Gastrocnemius medialis (tissue), 4 donors: ENCODE measurements at regions of chr2 and their contacts with region 1.

Region 1: GRCh38 chr2:31333527-31334183 is 80.9 kb downstream of the XDH start:
- DNase-seq: peak; percentile 60 to 75
- ATAC-seq: peak; percentile 79 to 93
- H3K4me3 ChIP-seq: no peak overlapping the region
- H3K27ac ChIP-seq: peak overlapping the region; percentile 20 to 78 (median 67)
- H3K4me1 ChIP-seq: peaks cover 9 to 17% of the 10 kb centered on the region in 2 donors
- H3K27me3 ChIP-seq: no peaks in the 10 kb centered on the region
- CTCF ChIP-seq: peak; percentile 85 to 96 (median 91)
- POLR2A ChIP-seq: no peak

Region 2: GRCh38 chr2:30208452-30208851 is 1125.2 kb before region 1 on chr2:
- in situ Hi-C with region 1: loop called in 1 of 4 experiments (anchors 25 kb)
- intact Hi-C with region 1: no loop called
- DNase-seq: peak; percentile 35 to 53
- ATAC-seq: peak; percentile 89
- H3K4me3 ChIP-seq: no peak overlapping the region
- H3K27ac ChIP-seq: no peak overlapping the region
- H3K4me1 ChIP-seq: no peaks in the 10 kb centered on the region
- H3K27me3 ChIP-seq: no peaks in the 10 kb centered on the region
- CTCF ChIP-seq: peak; percentile 79 to 92 (median 82)
- POLR2A ChIP-seq: no peak

Region 3: DNA sequence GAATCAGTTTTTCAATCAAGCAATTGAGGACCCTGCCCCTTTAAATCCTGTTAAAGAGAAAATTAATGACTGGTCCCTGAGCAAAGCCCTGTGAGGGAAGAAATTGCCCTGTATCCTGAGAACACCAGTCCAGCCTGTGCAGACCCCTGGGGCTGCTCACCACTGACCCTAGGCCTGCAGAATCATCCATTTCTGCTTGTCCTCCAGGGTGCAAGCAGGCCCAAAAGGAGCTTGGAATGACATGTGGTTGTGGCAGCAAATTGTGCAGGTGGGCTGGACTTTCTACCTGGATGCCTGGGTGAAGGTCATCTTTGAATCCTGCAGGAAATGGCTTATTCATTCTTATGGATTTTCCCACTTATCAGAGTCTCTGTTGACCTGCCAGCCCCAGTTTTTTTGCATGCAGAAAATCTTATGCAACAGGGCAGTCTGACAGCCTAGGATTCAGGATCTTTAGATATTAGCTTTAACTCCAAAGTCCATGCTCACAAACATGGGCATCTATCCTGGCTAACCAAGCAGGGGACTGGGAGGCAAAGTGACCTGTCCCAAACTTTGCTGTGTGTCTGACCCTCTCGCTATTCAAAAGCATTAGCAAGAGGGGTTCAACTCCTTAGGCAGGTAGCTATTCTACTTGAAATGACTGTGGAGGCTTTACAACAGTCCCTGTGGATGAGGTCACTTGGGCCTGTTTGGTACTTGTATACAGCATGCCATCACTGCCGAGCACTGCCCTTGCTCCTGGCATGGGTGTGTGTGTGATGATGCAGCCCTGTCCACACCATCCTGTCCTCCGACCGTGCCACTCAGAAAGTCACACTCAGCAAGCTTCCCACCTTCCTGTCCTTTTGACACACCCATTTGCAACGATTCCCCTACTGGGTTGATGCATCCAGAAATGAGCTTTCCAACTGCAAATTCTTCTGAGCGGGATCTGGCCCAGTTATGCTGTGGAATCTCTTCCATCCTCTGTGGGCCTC is 611.7 kb before region 1 on chr2:
- in situ Hi-C with region 1: loop called (anchors 5 to 10 kb)
- intact Hi-C with region 1: no loop called
- DNase-seq: no peak
- ATAC-seq: no peak
- H3K4me3 ChIP-seq: no peak overlapping the region
- H3K27ac ChIP-seq: no peak overlapping the region
- H3K4me1 ChIP-seq: no peaks in the 10 kb centered on the region
- H3K27me3 ChIP-seq: peaks cover 0 to 6% (median 0%) of the 10 kb centered on the region in 3 donors
- CTCF ChIP-seq: no peak
- POLR2A ChIP-seq: no peak

Region 4: DNA sequence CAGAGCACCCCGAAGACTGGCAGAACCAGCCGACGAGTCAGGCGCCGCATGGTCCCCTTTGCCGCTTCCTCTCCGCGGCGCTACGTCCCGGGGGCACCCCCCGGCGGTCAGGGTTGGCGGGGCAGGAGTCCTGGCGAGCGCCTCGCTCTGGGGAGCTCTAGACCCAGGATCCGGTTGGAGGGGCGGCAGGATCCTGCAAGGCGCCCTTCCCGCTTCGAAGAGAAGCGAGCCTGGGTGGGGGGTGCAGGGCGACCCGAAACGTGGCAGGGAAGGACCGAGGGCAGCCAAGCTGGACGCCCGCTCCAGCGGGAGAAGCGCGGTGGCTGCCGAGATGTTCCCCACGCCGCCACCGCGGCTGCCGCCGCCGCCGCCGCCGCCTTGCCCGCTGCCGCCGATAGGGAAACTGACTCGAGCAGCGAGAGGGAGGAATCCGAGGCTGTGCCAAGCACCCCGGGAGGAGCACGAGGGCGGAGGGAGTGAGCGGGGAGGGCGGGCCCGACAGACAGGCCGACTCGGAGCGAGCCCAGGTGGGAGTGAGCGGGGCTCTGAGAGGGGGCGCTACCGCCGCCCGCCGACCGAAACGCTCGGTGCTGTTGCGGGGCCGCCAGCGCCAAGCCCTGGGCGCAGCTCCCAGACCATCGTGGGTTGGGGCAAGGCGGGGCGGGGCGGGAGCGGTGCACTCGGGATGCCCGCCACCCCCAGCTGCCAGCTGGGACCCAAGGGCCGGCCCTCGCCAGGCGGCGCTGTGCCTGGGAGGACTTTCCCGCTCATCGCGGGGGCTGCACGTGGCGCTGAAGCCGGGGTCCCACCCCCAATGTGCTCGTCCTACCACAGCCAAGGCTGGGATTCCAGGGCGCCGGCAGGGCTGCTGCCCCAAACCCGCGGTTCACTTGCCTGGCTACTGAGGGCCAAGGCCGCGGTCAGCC is 195.4 kb before region 1 on chr2 and contains the start of gene GALNT14:
- in situ Hi-C with region 1: no loop called
- intact Hi-C with region 1: loop called (anchors 10 kb)
- DNase-seq: peak in 1 of 2 donors; percentile 12
- ATAC-seq: peak; percentile 39 to 55
- H3K4me3 ChIP-seq: peak within 1 kb of the TSS; percentile 53 to 67 (median 58)
- H3K27ac ChIP-seq: no peak within 1 kb of the TSS
- H3K4me1 ChIP-seq: peaks cover 8 to 10% of the 10 kb centered on the region in 2 donors
- H3K27me3 ChIP-seq: peaks cover 22 to 45% (median 30%) of the 10 kb centered on the region in 3 donors
- CTCF ChIP-seq: peak in 3 of 5 experiments; percentile 9 to 47 (median 25)
- POLR2A ChIP-seq: no peak
- total RNA-seq, gene GALNT14: 0.16 TPM in 1 of 4 donors, not detected in the others

Region 5: DNA sequence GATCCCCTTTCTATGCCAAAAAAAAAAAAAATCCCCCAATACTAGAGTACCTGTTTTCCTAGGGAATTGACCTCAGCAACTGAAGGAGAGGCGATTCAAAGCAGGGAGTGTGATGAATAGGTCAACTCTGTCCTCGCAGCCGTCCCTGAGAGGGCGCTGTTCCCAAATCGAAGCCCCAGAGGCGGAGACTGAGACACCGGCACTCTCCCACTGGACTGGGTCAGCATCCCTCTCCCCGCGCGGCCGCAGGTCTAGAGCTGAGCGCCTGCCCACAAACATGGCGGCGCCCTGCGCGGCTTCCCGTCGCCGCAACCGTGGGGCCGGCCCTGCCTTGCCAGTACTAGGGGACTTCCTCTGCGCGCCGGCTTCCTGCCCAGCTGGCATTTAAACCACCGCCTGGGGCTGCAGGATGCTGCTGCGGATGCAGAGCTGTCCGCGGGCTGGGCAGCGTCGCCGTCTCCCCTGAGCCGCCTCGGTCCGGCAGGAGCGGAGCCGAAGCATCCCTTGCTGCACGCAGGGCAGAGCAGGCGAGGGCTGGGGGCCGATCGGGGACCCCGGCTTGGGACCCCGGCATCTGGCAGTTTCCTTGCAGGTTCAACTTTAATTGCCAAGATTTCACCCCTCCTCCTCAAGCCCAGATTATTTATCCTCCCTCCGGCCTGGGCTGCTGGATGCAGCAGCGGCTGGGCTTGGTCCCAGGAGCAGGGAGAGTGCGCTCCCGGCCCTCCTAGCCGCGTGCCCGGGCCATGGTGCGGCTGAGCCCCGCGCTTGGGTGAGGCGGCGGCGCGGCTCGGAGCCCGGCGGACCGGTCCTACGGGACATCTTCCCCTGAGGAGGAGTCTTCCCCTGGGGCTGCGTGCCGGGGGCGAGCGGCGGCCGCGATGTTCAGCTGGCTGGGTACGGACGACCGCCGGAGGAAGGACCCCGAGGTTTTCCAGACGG is 99.6 kb before region 1 on chr2 and contains the start of gene EHD3:
- in situ Hi-C with region 1: loop called (anchors 10 kb)
- intact Hi-C with region 1: loop called (anchors 1 kb)
- DNase-seq: peak; percentile 74 to 76
- ATAC-seq: peak; percentile 83 to 88
- H3K4me3 ChIP-seq: peak within 1 kb of the TSS; percentile 56 to 68 (median 64)
- H3K27ac ChIP-seq: peak within 1 kb of the TSS; percentile 9 to 41 (median 22)
- H3K4me1 ChIP-seq: peaks cover 14 to 22% of the 10 kb centered on the region in 2 donors
- H3K27me3 ChIP-seq: no peaks in the 10 kb centered on the region
- CTCF ChIP-seq: peak; percentile 24 to 62 (median 51)
- POLR2A ChIP-seq: no peak
- total RNA-seq, gene EHD3: 1.5 to 3.1 (median 2.1) TPM

Region 6: DNA sequence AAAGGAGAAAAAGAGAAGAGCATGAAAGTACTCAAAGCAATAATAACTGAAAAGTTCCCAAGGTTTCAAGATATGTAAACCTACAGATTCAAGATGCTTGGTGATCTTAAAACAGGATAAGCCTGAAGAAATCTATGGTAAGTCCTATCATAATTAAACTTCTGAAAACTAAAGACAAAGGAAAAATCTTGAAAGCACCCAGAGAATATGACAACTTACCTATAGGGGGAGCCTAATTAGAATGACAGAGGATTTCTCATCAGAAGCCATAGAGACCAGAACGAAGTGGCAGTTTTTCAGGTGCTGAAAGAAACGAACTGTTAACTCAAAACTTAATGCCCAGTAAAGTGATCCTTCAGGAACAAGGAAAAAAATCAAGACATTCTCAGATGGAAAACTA is 21.2 kb after region 1 on chr2:
- in situ Hi-C with region 1: no loop called
- intact Hi-C with region 1: no loop called
- DNase-seq: no peak
- ATAC-seq: no peak
- H3K4me3 ChIP-seq: no peak overlapping the region
- H3K27ac ChIP-seq: no peak overlapping the region
- H3K4me1 ChIP-seq: no peaks in the 10 kb centered on the region
- H3K27me3 ChIP-seq: no peaks in the 10 kb centered on the region
- CTCF ChIP-seq: no peak
- POLR2A ChIP-seq: no peak